Heart right ventricle (tissue), 16 donors: ENCODE measurements at regions of chr4 and their contacts with region 1.

Region 1: DNA sequence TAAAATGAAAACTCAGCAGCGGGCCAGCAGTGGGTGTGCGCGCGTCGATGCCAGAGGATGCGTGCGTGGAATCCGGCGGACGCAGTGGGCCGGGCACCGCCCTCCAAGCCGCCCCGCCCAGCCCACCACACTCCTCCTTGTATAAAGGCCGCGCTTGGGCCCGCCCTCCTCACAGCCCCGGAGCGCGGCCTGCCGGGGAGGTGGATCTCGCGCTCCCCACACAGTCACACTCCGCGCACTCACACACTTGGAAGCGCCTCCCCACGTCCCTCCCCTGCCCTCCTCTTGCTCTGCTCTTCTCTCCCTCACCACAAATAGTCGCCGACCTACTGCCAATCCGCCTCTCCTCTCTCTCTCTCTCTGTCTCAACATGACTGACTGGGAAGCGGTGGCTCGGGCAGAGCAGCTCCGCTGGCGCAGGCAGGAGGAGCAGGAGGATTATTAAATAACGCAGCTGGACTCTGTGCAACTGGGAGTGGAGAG is at the start of gene CCSER1:
- DNase-seq: peak; percentile 76 to 79
- ATAC-seq: peak; percentile 91 to 99 (median 97)
- H3K4me3 ChIP-seq: peak within 1 kb of the TSS; percentile 50 to 77 (median 70)
- H3K27ac ChIP-seq: peak within 1 kb of the TSS; percentile 55 to 84 (median 76)
- H3K4me1 ChIP-seq: peaks cover 0 to 19% (median 7%) of the 10 kb centered on the region in 9 donors
- H3K27me3 ChIP-seq: peaks cover 0 to 20% (median 0%) of the 10 kb centered on the region in 7 donors
- CTCF ChIP-seq: no peak
- total RNA-seq, gene CCSER1: 9.9 to 16.4 (median 12.5) TPM

Region 2: GRCh38 chr4:89981789-89982334 is 145.4 kb before region 1 on chr4:
- intact Hi-C with region 1: no loop called
- DNase-seq: no peak
- ATAC-seq: no peak
- H3K4me3 ChIP-seq: no peak overlapping the region
- H3K27ac ChIP-seq: no peak overlapping the region
- H3K4me1 ChIP-seq: no peaks in the 10 kb centered on the region
- H3K27me3 ChIP-seq: no peaks in the 10 kb centered on the region
- CTCF ChIP-seq: no peak

Region 3: DNA sequence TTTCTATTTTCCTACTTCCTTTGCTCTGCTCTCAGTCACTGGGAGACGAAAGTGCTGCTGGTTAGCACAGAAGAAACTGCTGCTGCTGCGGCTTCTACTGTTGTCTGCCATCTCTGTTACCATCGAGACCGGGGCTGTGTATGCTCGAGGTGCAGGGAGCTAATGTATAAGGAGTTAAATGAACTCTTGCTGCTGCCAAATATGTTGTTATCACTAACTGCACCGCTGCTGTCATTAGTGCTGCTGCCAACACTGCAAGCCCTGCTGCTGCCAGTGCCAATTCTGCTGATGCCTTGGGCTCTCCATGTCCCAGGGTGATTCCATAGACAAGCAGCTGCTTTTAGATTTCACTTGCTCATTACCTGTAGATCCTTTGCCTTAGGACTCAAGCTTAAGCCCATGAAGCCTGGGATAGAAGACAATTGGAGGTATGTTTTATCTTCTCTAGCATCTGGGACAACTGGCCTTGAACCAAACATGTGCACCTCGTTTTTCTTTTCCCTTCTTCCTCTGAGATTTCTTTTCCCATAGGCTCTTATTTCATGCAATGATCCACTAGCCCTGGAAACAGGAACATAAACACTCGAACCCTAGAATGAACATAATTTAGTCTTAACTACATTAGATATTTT is 107.8 kb after region 1 on chr4:
- intact Hi-C with region 1: loop called in 1 of 10 experiments (anchors 5 kb)
- DNase-seq: peak; percentile 54 to 55
- ATAC-seq: peak; percentile 82 to 99 (median 96)
- H3K4me3 ChIP-seq: peak overlapping the region in 7 of 10 donors; percentile 14 to 37 (median 34)
- H3K27ac ChIP-seq: peak overlapping the region in 7 of 10 donors; percentile 20 to 73 (median 58)
- H3K4me1 ChIP-seq: peaks cover 0 to 12% (median 0%) of the 10 kb centered on the region in 9 donors
- H3K27me3 ChIP-seq: no peaks in the 10 kb centered on the region
- CTCF ChIP-seq: no peak

Region 4: DNA sequence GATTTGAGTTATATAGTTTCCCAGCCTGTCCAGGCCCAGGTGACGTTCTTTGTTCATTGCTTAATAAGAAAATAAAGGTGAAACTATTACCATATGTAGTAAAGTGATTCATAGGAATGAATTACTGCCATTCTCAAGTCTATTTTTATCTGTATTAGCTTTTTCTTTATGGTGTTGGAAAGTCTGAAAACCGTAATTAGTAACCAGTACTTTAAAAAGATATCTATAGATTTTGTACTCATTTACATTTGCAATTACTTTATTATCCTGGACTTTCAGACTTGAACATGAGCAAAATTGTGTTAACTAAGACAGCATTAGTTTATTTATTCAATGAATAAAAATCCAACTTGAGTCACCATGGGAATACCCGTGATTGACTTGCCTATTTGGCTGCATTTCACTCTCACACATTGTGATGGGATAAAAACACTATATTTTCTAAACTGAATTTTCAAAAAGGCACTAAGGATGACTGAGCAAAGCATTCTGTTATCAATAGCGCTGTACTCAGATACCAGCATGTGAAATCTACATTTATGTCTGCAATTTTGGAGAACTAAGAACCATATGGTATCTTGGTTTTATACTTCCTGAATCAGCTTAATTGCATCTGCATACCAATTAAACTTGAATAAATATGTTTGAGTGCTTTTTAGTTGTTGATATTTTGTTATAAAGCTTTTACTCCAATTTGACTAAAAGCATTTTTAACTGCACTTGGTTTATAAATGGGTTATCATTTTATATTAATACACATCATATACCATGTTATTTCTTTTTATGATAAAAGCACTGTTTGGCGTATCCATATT is 154.5 kb after region 1 on chr4:
- intact Hi-C with region 1: loop called in 3 of 10 experiments (anchors 5 to 10 kb)
- DNase-seq: no peak
- ATAC-seq: no peak
- H3K4me3 ChIP-seq: no peak overlapping the region
- H3K27ac ChIP-seq: no peak overlapping the region
- H3K4me1 ChIP-seq: no peaks in the 10 kb centered on the region
- H3K27me3 ChIP-seq: no peaks in the 10 kb centered on the region
- CTCF ChIP-seq: no peak